HepG2 (cell line): ENCODE measurements at regions of chr6 and their contacts with region 1.

Region 1: GRCh38 chr6:145704143-145704781 is 31.1 kb downstream of the EPM2A start:
- DNase-seq: no peak
- ATAC-seq: no peak
- H3K4me3 ChIP-seq: no peak overlapping the region
- H3K27ac ChIP-seq: no peak overlapping the region
- H3K4me1 ChIP-seq: no peaks in the 10 kb centered on the region
- H3K27me3 ChIP-seq: no peaks in the 10 kb centered on the region
- CTCF ChIP-seq: no peak
- EP300 ChIP-seq: no peak
- POLR2A ChIP-seq: no peak
- RAD21 ChIP-seq: no peak

Region 2: DNA sequence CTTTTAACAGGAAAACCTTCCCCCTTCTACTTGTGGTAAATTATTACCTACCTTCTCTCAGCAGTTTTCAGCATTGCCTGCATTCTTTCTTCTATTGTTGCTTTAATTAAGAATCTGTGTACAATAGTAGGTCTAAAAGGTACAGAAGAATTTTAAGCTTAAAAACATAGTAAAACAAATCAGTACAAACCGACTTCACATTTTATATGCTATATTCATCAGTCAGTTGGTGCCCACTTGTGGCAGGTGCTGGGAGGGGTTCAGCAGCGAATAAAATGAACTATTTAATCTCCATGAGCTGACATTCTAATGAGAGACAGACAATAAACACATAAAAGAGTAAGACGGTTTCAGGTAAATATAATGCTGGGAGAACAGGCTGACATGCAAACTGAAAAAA is 183.7 kb after region 1 on chr6:
- CTCF ChIA-PET with region 1: no interaction called
- POLR2A ChIA-PET with region 1: no interaction called
- in situ Hi-C with region 1: no loop called
- intact Hi-C with region 1: loop called (anchors 1 kb)
- DNase-seq: no peak
- ATAC-seq: no peak; the same call in 2 of the 3 replicates
- H3K4me3 ChIP-seq: no peak overlapping the region
- H3K27ac ChIP-seq: no peak overlapping the region
- H3K4me1 ChIP-seq: peaks cover 21% of the 10 kb centered on the region
- H3K27me3 ChIP-seq: no peaks in the 10 kb centered on the region
- CTCF ChIP-seq: peak; percentile 47
- EP300 ChIP-seq: no peak
- POLR2A ChIP-seq: no peak
- RAD21 ChIP-seq: no peak